A673 (cell line): ENCODE measurements at regions of chr7 and their contacts with region 1.

Region 1: DNA sequence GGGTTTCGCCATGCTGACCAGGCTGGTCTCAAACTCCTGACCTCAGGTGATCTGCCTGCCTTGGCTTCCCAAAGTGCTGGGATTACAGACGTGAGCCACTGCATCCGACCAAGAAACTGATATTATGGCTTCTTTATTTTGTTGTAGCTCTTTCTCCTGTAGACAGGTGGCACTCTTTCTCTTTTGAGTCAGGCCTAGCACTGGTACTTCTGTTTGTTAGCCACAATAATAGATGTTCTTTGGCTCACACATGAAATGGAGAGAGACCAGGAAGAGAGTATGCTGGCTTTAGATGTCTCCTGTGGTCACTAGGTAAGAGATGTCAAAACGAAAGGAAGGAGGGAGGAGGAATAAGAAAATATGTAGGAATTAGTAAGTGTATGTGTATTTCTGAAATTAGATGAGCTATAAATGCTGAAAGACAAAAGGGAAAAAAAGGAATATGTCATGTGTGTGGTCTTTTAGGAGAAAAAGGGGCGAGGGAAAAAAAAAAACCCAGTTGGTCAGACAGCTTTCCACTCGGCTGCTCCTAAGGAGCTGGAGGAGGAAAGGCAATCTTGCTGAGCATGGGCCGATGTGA is 78.7 kb downstream of the CLEC2L start:
- DNase-seq: peak; percentile 48
- H3K4me3 ChIP-seq: no peak overlapping the region
- H3K27ac ChIP-seq: no peak overlapping the region
- H3K4me1 ChIP-seq: peaks cover 7% of the 10 kb centered on the region
- H3K27me3 ChIP-seq: no peaks in the 10 kb centered on the region
- CTCF ChIP-seq: peak; percentile 68

Region 2: DNA sequence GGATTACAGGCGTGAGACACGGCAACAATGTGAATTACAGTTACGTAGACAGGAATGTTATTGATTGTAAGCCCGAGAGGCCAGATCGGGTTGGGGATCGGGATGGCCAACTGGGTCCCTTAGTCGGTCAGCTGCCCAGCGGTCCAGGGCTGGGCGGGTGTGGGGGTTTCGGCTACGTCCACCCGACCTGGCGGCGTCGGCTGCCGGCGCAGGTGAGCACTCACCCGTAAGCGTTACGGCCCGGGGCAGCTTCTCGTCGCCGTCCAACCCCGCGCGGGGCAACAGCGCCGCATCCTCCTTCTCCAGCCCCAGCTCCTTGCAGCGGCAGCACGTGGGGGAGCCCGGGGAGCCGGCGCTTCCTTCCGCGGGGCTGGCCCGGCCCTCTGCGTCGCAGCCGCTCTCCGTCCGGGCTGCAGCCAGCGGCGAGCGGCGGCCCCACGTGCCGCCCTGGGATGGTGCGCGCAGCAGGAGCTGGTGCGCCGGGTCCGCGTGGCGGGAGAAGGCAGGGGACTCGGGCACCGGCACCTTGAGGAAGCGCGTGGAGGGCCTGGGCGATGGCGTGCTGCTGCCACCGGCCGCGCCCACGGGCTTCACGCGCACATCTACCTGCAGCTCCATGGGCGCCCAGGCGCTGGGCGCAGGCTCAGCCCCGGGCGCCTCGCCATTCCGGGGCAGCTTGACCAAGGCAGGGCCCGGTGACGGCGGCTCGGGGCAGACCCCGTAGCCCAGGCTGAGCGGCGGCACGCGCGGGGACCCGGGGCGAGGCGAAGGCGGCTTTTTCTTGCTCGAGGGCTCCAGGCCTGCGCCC is 119.4 kb before region 1 on chr7:
- CTCF ChIA-PET with region 1: no interaction called
- POLR2A ChIA-PET with region 1: no interaction called
- intact Hi-C with region 1: no loop called
- DNase-seq: peak; percentile 16
- H3K4me3 ChIP-seq: peak overlapping the region; percentile 24
- H3K27ac ChIP-seq: no peak overlapping the region
- H3K4me1 ChIP-seq: peaks cover 13% of the 10 kb centered on the region
- H3K27me3 ChIP-seq: peaks cover 59% of the 10 kb centered on the region
- CTCF ChIP-seq: no peak

Region 3: GRCh38 chr7:139589474-139589873 is 12.8 kb before region 1 on chr7:
- CTCF ChIA-PET with region 1: interaction called, 19 read pairs
- POLR2A ChIA-PET with region 1: interaction called, 3 read pairs
- intact Hi-C with region 1: no loop called
- DNase-seq: no peak
- H3K4me3 ChIP-seq: no peak overlapping the region
- H3K27ac ChIP-seq: no peak overlapping the region
- H3K4me1 ChIP-seq: no peaks in the 10 kb centered on the region
- H3K27me3 ChIP-seq: no peaks in the 10 kb centered on the region
- CTCF ChIP-seq: no peak